ENCODE measurements at regions of chr6 and their contacts with region 1.

Region 1: DNA sequence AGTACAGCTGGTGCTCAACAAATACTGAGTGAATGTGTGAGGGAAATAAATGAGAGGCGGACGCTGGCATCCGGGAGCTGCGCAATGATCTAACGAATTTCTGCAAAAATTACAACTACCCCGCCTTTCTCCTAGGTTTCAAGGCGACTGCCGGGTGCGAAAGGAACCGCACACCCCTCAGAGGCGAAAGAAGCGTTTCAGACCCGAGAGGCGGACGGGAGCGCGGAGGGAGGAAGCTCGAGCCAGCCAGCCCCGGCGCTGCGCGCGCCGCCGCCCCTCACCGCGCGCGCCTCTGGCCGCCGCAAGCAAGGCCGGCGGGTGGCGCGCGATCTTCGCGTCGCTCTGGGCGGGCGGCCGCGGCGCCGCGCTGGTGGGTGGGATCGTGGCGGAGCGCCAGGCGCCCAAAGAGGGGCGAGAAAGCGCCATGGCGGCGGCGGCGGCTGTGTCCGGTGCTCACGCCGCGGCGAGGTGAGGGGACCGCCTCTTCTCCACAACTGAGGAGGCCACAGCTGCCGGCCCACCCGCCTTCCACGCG is at the start of gene BLTP3A:
- DNase-seq: no peak
- ATAC-seq: peak; percentile 95
- H3K4me3 ChIP-seq: peak within 1 kb of the TSS; percentile 88
- H3K27ac ChIP-seq: peak within 1 kb of the TSS; percentile 79
- H3K4me1 ChIP-seq: no peaks in the 10 kb centered on the region; the same call in 1 of the 2 replicates
- H3K27me3 ChIP-seq: no peaks in the 10 kb centered on the region
- CTCF ChIP-seq: peak in 1 of 3 experiments; percentile 44; a peak in 1 of 6 replicates
- EP300 ChIP-seq: no peak
- POLR2A ChIP-seq: peak; percentile 89
- RAD21 ChIP-seq: peak; percentile 50
- polyA plus RNA-seq, gene BLTP3A: 2.7 to 2.8 TPM

Region 2: DNA sequence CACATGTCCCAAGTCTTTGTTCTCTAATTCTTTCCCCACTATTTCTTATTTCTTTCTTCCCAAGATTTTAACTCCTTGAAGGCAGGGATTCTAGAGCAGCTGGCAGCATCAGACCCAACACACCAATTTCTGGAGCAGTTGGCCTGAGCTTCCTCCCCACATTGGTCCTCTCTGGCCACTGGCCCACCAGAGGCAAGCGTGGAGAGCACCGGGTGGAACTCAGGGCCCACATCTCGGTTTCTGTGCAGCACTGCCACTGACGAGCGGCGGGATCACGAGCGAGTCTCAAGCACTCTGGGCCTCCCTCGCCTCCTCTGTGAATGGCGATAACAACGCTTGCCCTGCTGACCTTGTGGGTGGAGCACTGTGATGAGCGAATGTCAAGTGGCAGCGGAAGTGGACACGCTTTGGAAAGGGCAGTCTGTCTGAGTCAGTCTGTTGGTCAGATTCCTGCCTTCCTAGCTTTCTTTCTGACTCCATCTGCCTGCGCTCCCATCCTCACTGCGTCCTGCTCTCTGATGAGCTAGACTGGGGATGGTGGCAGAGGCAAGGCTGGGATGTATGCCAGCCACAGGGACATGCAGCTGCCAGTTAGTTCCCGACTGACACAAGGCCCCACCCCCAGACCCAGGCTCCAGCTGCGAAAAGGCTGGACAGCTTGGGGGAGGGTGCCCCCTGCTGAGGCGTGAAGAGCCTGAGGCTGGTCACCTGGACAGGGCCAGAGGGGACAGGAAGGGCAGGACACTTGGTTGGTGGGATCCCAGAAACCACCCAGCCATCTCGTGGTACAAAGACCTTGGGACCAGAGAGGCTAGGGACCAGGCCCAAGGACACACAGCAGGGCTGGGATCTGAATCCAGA is 231.2 kb before region 1 on chr6:
- CTCF ChIA-PET with region 1: no interaction called
- POLR2A ChIA-PET with region 1: no interaction called
- RAD21 ChIA-PET with region 1: no interaction called
- SMC1A ChIA-PET with region 1: no interaction called
- in situ Hi-C with region 1: no loop called
- intact Hi-C with region 1: no loop called
- DNase-seq: no peak
- ATAC-seq: no peak
- H3K4me3 ChIP-seq: no peak overlapping the region
- H3K27ac ChIP-seq: no peak overlapping the region
- H3K4me1 ChIP-seq: no peaks in the 10 kb centered on the region
- H3K27me3 ChIP-seq: no peaks in the 10 kb centered on the region; a peak in 1 of 4 replicates
- CTCF ChIP-seq: no peak; a peak in 1 of 6 replicates
- EP300 ChIP-seq: no peak
- POLR2A ChIP-seq: no peak
- RAD21 ChIP-seq: 0 out of 2 replicates have a peak, but pooled peaks have one; percentile 3

Region 3: DNA sequence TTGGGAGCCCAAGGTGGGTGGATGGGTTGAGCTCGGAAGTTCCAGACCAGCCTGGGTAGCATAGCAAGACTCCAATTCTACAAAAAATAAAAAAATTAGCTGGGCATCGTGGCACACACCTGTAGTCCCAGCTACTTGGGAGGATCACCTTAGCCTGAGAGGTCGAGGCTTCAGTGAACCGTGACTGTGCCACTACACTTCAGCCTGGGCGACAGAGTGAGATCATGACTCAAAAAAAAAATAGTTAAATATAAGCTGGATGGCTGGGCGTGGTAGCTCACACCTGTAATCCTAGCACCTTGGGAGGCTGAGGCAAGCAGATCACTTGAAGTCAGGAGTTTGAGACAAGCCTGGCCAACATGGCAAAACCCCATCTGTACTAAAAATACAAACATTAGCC is 13.3 kb after region 1 on chr6:
- CTCF ChIA-PET with region 1: interaction called, 12 read pairs
- POLR2A ChIA-PET with region 1: interaction called, 3 read pairs
- RAD21 ChIA-PET with region 1: interaction called, 9 read pairs
- SMC1A ChIA-PET with region 1: interaction called, 5 read pairs
- in situ Hi-C with region 1: no loop called
- intact Hi-C with region 1: no loop called
- DNase-seq: no peak
- ATAC-seq: peak; percentile 36; the same call in 1 of the 3 replicates
- H3K4me3 ChIP-seq: no peak overlapping the region
- H3K27ac ChIP-seq: no peak overlapping the region
- H3K4me1 ChIP-seq: peaks cover 7% of the 10 kb centered on the region; the same call in 1 of the 2 replicates
- H3K27me3 ChIP-seq: no peaks in the 10 kb centered on the region
- CTCF ChIP-seq: no peak
- EP300 ChIP-seq: no peak
- POLR2A ChIP-seq: no peak
- RAD21 ChIP-seq: no peak

Region 4: GRCh38 chr6:34829137-34829536 is 37.4 kb after region 1 on chr6:
- CTCF ChIA-PET with region 1: no interaction called
- POLR2A ChIA-PET with region 1: no interaction called
- RAD21 ChIA-PET with region 1: no interaction called
- SMC1A ChIA-PET with region 1: no interaction called
- in situ Hi-C with region 1: no loop called
- intact Hi-C with region 1: no loop called
- DNase-seq: no peak
- ATAC-seq: no peak
- H3K4me3 ChIP-seq: no peak overlapping the region
- H3K27ac ChIP-seq: no peak overlapping the region
- H3K4me1 ChIP-seq: no peaks in the 10 kb centered on the region; the same call in 1 of the 2 replicates
- H3K27me3 ChIP-seq: no peaks in the 10 kb centered on the region
- CTCF ChIP-seq: no peak
- EP300 ChIP-seq: no peak
- POLR2A ChIP-seq: no peak
- RAD21 ChIP-seq: no peak

Region 5: DNA sequence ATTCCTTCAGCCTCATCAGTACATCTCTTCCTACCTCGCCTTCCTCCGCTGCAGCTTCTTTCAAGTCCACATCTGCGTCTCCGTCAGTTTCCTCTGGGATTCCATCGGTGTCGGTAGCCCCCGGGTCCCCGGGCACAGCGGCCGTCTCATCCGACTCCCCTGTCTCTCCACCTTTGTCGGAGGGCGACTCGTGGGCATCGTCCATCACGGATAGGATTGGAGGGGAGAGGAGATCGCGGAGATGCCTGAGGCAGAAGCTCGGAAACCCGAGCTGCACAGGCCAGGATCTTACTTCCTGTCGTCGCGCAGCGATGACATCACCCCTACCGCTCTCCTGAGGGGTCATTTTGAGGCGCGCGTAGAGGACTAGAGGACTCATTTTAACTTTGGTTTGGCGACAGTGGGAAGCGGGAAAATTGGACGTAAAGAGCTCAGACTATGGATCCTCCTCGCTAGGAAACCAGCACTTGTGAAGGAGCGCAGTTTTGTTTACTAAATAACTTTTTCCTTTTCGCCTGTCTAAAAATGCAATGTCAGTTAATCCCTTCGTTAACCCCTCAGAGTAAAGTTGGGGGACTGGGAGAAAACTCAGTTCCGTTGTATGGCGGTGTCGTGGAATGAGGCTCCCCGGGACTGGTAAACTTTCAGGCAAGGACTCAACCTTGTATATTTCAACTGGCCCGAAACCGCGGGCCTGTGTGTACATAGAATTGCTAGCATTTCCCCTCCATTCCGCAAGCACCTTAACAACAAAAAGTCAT is 96.2 kb after region 1 on chr6 and contains the start of gene TAF11:
- CTCF ChIA-PET with region 1: interaction called, 11 read pairs
- POLR2A ChIA-PET with region 1: interaction called, 6 read pairs
- RAD21 ChIA-PET with region 1: interaction called, 10 read pairs
- SMC1A ChIA-PET with region 1: interaction called, 7 read pairs
- in situ Hi-C with region 1: no loop called
- intact Hi-C with region 1: loop called (anchors 5 kb)
- DNase-seq: peak; percentile 61
- ATAC-seq: peak; percentile 89
- H3K4me3 ChIP-seq: peak within 1 kb of the TSS; percentile 97
- H3K27ac ChIP-seq: peak within 1 kb of the TSS; percentile 88
- H3K4me1 ChIP-seq: peaks cover 5% of the 10 kb centered on the region
- H3K27me3 ChIP-seq: no peaks in the 10 kb centered on the region
- CTCF ChIP-seq: no peak
- EP300 ChIP-seq: 0 out of 4 replicates have a peak, but pooled peaks of 1 of the 2 experiments have one; percentile 12
- POLR2A ChIP-seq: peak; percentile 97
- RAD21 ChIP-seq: no peak
- polyA plus RNA-seq, gene TAF11: 24.6 to 31.7 TPM

Measured in GM12878 (cell line).